IMR-90 (cell line): ENCODE measurements at regions of chr11 and their contacts with region 1.

Region 1: GRCh38 chr11:32809313-32809712 is 14.9 kb upstream of the CCDC73 start:
- DNase-seq: peak; percentile 72
- ATAC-seq: peak; percentile 100
- H3K4me3 ChIP-seq: no peak overlapping the region
- H3K27ac ChIP-seq: no peak overlapping the region
- H3K4me1 ChIP-seq: no peaks in the 10 kb centered on the region
- H3K27me3 ChIP-seq: no peaks in the 10 kb centered on the region; the same call in 1 of the 2 replicates
- CTCF ChIP-seq: peak; percentile 73
- POLR2A ChIP-seq: no peak
- RAD21 ChIP-seq: peak; percentile 76

Region 2: GRCh38 chr11:32893343-32894148 is 84.2 kb after region 1 on chr11:
- CTCF ChIA-PET with region 1: no interaction called
- POLR2A ChIA-PET with region 1: no interaction called
- dilution Hi-C with region 1: no loop called
- in situ Hi-C with region 1: no loop called
- intact Hi-C with region 1: loop called (anchors 5 kb)
- DNase-seq: peak; percentile 26
- ATAC-seq: peak; percentile 45
- H3K4me3 ChIP-seq: peak overlapping the region; percentile 79
- H3K27ac ChIP-seq: peak overlapping the region; percentile 58
- H3K4me1 ChIP-seq: peaks cover 2% of the 10 kb centered on the region; the same call in 1 of the 2 replicates
- H3K27me3 ChIP-seq: no peaks in the 10 kb centered on the region
- CTCF ChIP-seq: peak; percentile 51
- POLR2A ChIP-seq: 0 out of 2 replicates have a peak, but pooled peaks have one; percentile 8
- RAD21 ChIP-seq: no peak

Region 3: DNA sequence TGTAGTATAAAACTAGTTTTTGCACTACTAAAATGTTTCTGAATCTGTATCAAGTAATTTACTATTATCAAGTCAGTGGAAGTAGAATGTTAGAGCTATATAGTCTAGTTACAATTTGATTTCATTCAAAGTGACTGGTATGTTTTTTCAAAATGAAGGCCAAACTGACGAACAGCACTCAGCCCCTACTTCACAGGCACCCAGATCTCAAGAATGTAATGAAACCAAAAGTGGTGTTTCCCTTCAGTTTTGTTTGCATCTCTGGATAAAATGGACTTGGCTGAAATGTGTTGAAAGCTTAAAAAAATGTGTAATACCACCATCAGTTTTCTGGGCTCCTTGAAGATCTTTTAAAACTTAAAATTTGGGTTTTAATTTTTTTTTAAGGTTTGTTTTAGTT is 129.7 kb after region 1 on chr11:
- CTCF ChIA-PET with region 1: no interaction called
- POLR2A ChIA-PET with region 1: no interaction called
- dilution Hi-C with region 1: no loop called
- in situ Hi-C with region 1: loop called (anchors 25 kb)
- intact Hi-C with region 1: no loop called
- DNase-seq: no peak
- ATAC-seq: no peak
- H3K4me3 ChIP-seq: no peak overlapping the region
- H3K27ac ChIP-seq: no peak overlapping the region
- H3K4me1 ChIP-seq: no peaks in the 10 kb centered on the region
- H3K27me3 ChIP-seq: no peaks in the 10 kb centered on the region
- CTCF ChIP-seq: no peak
- POLR2A ChIP-seq: no peak
- RAD21 ChIP-seq: no peak

Region 4: DNA sequence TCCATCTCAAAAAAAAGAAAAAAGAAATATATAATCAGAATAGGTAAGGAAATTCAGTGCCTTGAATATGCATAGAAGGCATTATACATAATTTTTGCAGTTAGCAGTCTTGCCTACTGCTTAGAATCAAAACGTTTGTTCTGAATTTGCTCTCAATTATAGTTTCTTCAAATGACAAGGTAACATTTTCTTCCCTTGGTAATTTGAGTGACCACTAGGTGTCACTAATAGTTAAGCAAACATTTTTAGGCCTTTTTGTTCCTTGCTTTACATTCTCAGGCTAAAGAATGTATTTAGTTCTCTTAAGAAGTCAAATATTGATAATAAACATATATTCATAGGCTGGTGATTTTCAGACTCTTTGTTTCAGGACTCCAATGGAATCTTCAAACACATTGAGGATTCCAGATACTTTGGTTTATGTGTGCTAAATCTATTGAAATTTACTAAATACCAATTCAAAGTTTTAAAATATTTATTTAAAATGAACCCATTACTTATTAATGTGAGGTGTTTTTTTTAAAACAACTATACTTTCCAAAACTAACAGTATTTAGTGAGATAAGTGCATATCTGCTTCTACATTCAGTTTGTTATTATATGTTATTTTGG is 151.3 kb after region 1 on chr11:
- CTCF ChIA-PET with region 1: no interaction called
- POLR2A ChIA-PET with region 1: no interaction called
- dilution Hi-C with region 1: no loop called
- in situ Hi-C with region 1: no loop called
- intact Hi-C with region 1: loop called (anchors 5 kb)
- DNase-seq: peak; percentile 71
- ATAC-seq: peak; percentile 61; the same call in 1 of the 2 replicates
- H3K4me3 ChIP-seq: no peak overlapping the region
- H3K27ac ChIP-seq: no peak overlapping the region
- H3K4me1 ChIP-seq: no peaks in the 10 kb centered on the region
- H3K27me3 ChIP-seq: no peaks in the 10 kb centered on the region
- CTCF ChIP-seq: peak; percentile 78
- POLR2A ChIP-seq: no peak
- RAD21 ChIP-seq: peak; percentile 85